Cardiac septum (tissue), 1 donor: ENCODE measurements at regions of chr2 and their contacts with region 1.

Region 1: GRCh38 chr2:38750891-38751595 is at the start of gene SRSF7:
- DNase-seq: peak; percentile 98
- total RNA-seq, gene SRSF7: 55.0 TPM

Region 2: DNA sequence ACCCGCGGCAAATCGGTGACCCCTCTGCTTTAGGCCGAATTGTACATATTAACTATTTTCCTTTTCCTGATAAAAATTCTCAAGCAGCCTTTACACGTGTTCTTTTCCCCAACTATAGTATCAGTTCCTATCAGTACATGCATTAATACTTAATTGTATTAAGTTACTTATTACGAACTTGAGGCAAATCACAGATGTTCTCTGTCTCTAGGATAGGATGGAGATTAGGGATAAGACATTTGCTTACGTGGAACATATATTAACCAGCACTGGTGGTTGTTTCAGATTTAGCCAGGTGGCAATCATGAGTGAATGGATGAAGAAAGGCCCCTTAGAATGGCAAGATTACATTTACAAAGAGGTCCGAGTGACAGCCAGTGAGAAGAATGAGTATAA is 27.6 kb after region 1 on chr2:
- intact Hi-C with region 1: loop called (anchors 1 kb)
- DNase-seq: no peak

Region 3: DNA sequence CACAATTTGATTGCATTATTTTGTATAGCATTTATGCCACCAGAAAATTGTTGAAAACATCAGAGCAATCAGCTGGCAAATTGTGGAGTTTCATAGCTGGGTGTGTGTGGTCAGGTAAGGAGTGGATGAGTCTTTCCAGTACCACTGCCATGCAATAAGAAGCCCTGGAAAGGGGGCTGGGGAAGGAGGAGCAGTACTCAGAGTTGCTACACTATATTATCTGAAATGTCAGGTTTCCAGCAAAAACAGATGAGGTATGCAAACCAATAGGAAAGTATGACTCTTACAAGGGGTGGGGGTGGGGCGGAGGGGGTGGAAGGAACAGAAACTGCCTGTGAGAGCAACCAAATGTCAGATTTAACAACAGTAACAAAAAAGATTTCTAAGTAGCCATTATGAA is 257.6 kb after region 1 on chr2:
- intact Hi-C with region 1: no loop called
- DNase-seq: no peak